BJ (cell line): ENCODE measurements at regions of chr2 and their contacts with region 1.

Region 1: GRCh38 chr2:236711440-236711839 is 141.8 kb downstream of the ACKR3 start:
- DNase-seq: no peak
- H3K4me3 ChIP-seq: no peak overlapping the region
- H3K27me3 ChIP-seq: 0 out of 2 replicates have a peak, but pooled peaks cover 6% of the 10 kb centered on the region
- CTCF ChIP-seq: no peak

Region 2: GRCh38 chr2:236694146-236694888 is 17.1 kb before region 1 on chr2:
- CTCF ChIA-PET with region 1: interaction called, 10 read pairs
- POLR2A ChIA-PET with region 1: no interaction called
- DNase-seq: no peak
- H3K4me3 ChIP-seq: no peak overlapping the region
- H3K27me3 ChIP-seq: peaks cover 13% of the 10 kb centered on the region
- CTCF ChIP-seq: no peak